Endothelial cell of umbilical vein (primary cell): ENCODE measurements at regions of chr17 and their contacts with region 1.

Region 1: DNA sequence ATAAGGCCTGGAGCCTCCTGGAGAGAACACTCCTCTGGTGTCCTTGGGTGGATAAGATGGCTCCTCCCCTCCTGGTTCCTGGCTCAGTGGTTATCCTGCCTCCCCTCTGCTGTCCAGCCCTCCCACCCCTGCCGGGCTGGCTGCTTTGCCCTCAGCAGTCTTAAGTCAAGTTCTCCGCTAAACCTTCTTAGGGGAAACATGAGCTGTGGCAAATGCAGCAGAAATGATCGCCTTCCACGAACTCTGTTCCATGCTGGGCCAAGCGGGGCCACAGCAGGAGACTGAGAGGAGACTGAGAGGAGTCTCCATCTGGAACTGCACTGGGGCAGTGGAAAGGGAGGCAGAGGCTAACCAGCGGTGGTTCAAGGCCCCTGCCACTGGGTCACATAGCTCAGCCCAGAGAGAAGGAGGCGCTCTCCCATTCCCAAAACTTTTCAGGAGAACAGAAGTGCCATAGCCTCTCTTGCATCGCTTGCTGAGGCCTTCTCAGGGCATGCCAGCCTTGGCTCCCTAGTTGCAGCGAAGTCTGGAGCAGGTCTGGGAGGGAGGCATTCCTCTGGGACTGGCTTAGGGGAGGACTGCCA is 26.9 kb downstream of the TNS4 start:
- DNase-seq: no peak
- H3K4me3 ChIP-seq: no peak overlapping the region
- H3K27ac ChIP-seq: no peak overlapping the region
- H3K4me1 ChIP-seq: no peaks in the 10 kb centered on the region
- H3K27me3 ChIP-seq: peaks cover 0 to 4% of the 10 kb centered on the region in 2 experiments
- CTCF ChIP-seq: no peak
- POLR2A ChIP-seq: no peak

Region 2: GRCh38 chr17:40345161-40345993 is 129.1 kb before region 1 on chr17:
- CTCF ChIA-PET with region 1: no interaction called
- POLR2A ChIA-PET with region 1: no interaction called
- dilution Hi-C with region 1: no loop called
- intact Hi-C with region 1: no loop called
- DNase-seq: peak; percentile 78
- H3K4me3 ChIP-seq: peak overlapping the region in 2 of 3 experiments; percentile 69 to 85
- H3K27ac ChIP-seq: peak overlapping the region; percentile 77
- H3K4me1 ChIP-seq: peaks cover 74% of the 10 kb centered on the region
- H3K27me3 ChIP-seq: no peaks in the 10 kb centered on the region
- CTCF ChIP-seq: no peak
- POLR2A ChIP-seq: no peak

Region 3: GRCh38 chr17:40362696-40363110 is 111.8 kb before region 1 on chr17:
- CTCF ChIA-PET with region 1: interaction called, 41 read pairs
- POLR2A ChIA-PET with region 1: no interaction called
- dilution Hi-C with region 1: no loop called
- intact Hi-C with region 1: loop called (anchors 1 kb)
- DNase-seq: peak; percentile 71
- H3K4me3 ChIP-seq: peak overlapping the region in 1 of 3 experiments; percentile 41
- H3K27ac ChIP-seq: no peak overlapping the region
- H3K4me1 ChIP-seq: peaks cover 7% of the 10 kb centered on the region
- H3K27me3 ChIP-seq: no peaks in the 10 kb centered on the region
- CTCF ChIP-seq: peak; percentile 85 to 88
- POLR2A ChIP-seq: no peak

Region 4: DNA sequence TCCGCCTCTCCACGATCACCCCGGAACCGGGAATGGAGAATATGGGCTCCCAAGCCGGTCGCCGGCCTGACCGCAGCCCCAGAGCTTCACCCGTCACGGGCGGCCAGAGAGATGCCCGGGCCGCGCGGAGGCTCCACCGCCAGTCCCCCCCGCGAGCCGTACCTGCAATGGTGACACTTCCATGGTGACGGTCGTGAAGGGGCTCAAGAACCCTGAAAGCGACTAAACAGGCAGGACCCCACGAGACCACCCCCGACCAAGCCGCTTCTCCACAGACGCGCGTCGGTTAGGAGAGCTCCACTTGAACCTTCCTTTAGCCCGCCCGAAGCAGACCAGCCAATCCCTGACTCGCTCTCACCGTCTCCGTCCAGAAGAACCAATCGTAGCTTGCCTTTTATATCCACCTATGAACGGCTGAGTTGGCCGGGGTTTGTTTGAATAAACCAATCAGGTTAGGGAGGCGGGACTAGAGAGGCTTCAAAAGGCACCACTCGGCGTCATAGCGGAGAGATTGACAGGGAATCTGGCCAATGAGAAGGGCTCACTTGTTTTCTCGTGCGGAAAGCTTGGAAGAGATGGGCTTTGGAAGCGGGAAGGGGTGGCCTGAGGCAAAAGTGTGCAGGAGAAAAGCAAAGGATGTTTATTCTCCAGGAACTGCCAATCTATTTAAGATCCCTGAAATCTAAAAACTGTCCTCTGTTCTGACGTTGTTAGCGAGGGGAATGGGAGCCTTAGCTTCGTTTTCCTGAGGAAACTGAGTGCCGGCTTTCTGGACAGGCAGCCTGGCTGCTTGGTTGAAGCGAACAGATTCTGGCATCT is 56.7 kb before region 1 on chr17 and contains the start of gene TOP2A:
- CTCF ChIA-PET with region 1: interaction called, 49 read pairs
- POLR2A ChIA-PET with region 1: no interaction called
- dilution Hi-C with region 1: no loop called
- intact Hi-C with region 1: no loop called
- DNase-seq: peak; percentile 100
- H3K4me3 ChIP-seq: peak within 1 kb of the TSS; percentile 72 to 91 (median 73)
- H3K27ac ChIP-seq: peak within 1 kb of the TSS; percentile 6
- H3K4me1 ChIP-seq: peaks cover 25% of the 10 kb centered on the region
- H3K27me3 ChIP-seq: no peaks in the 10 kb centered on the region
- CTCF ChIP-seq: no peak
- POLR2A ChIP-seq: peak; percentile 67
- total RNA-seq, gene TOP2A: 149 and 160 TPM in 2 replicates

Region 5: GRCh38 chr17:40450175-40450574 is 24.3 kb before region 1 on chr17:
- CTCF ChIA-PET with region 1: interaction called, 143 read pairs
- POLR2A ChIA-PET with region 1: interaction called, 7 read pairs
- dilution Hi-C with region 1: no loop called
- intact Hi-C with region 1: no loop called
- DNase-seq: peak; percentile 65
- H3K4me3 ChIP-seq: no peak overlapping the region
- H3K27ac ChIP-seq: no peak overlapping the region
- H3K4me1 ChIP-seq: peaks cover 53% of the 10 kb centered on the region
- H3K27me3 ChIP-seq: no peaks in the 10 kb centered on the region
- CTCF ChIP-seq: peak; percentile 64 to 75
- POLR2A ChIP-seq: no peak

Region 6: GRCh38 chr17:40499551-40500174 is 25.2 kb after region 1 on chr17:
- CTCF ChIA-PET with region 1: interaction called, 28 read pairs
- POLR2A ChIA-PET with region 1: no interaction called
- dilution Hi-C with region 1: no loop called
- intact Hi-C with region 1: no loop called
- DNase-seq: peak; percentile 58
- H3K4me3 ChIP-seq: no peak overlapping the region
- H3K27ac ChIP-seq: no peak overlapping the region
- H3K4me1 ChIP-seq: peaks cover 7% of the 10 kb centered on the region
- H3K27me3 ChIP-seq: peaks cover 0 to 6% of the 10 kb centered on the region in 2 experiments
- CTCF ChIP-seq: no peak
- POLR2A ChIP-seq: no peak

Region 7: GRCh38 chr17:40559954-40560591 is 85.6 kb after region 1 on chr17:
- CTCF ChIA-PET with region 1: interaction called, 75 read pairs
- POLR2A ChIA-PET with region 1: no interaction called
- dilution Hi-C with region 1: no loop called
- intact Hi-C with region 1: no loop called
- DNase-seq: peak; percentile 88
- H3K4me3 ChIP-seq: no peak overlapping the region
- H3K27ac ChIP-seq: no peak overlapping the region
- H3K4me1 ChIP-seq: peaks cover 18% of the 10 kb centered on the region
- H3K27me3 ChIP-seq: peaks cover 15 to 27% of the 10 kb centered on the region in 2 experiments
- CTCF ChIP-seq: peak; percentile 97
- POLR2A ChIP-seq: no peak